ENCODE measurements at regions of chr6 and their contacts with region 1.

Region 1: DNA sequence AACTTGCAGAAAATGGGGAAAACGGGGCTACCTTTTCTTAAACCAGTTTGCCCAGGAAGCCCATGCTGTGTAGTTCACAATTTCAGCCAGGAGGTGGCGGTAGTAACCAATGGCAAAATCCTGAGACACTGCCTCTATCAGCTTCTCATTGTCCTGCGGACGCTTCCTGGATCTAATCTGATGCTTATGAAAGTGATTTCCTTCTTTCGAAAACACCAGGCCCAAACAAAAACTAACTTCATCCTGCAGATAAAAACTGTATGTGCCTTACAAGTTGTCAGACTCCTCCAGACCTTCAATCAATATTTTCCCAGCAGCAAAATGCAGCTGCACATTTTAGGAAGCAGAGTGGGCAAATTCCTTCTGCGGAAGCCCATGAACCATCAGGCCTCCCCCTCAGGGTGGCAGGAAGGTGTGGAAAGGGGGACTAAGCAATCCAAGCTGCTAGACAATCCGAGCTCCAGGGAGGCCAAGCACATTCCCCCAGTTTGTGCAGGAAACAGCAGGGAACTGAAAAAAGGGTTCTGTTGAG is 88.5 kb downstream of the LY86 start:
- DNase-seq: peak; percentile 63
- H3K4me3 ChIP-seq: no peak overlapping the region
- H3K27ac ChIP-seq: no peak overlapping the region
- H3K4me1 ChIP-seq: peaks cover under 1% of the 10 kb centered on the region
- H3K27me3 ChIP-seq: no peaks in the 10 kb centered on the region
- CTCF ChIP-seq: peak; percentile 96 to 98

Region 2: GRCh38 chr6:6724539-6725467 is 47.8 kb after region 1 on chr6:
- CTCF ChIA-PET with region 1: no interaction called
- dilution Hi-C with region 1: no loop called
- in situ Hi-C with region 1: no loop called
- intact Hi-C with region 1: loop called (anchors 1 kb)
- DNase-seq: peak; percentile 55
- H3K4me3 ChIP-seq: peak overlapping the region; percentile 26 to 47 (median 34)
- H3K27ac ChIP-seq: no peak overlapping the region
- H3K4me1 ChIP-seq: peaks cover 13% of the 10 kb centered on the region
- H3K27me3 ChIP-seq: no peaks in the 10 kb centered on the region
- CTCF ChIP-seq: peak; percentile 49 to 78

Region 3: GRCh38 chr6:6736791-6737654 is 60.0 kb after region 1 on chr6:
- CTCF ChIA-PET with region 1: no interaction called
- dilution Hi-C with region 1: no loop called
- in situ Hi-C with region 1: no loop called
- intact Hi-C with region 1: no loop called
- DNase-seq: no peak
- H3K4me3 ChIP-seq: peak overlapping the region in 2 of 3 experiments; percentile 37 to 39
- H3K27ac ChIP-seq: no peak overlapping the region
- H3K4me1 ChIP-seq: peaks cover 5% of the 10 kb centered on the region
- H3K27me3 ChIP-seq: no peaks in the 10 kb centered on the region
- CTCF ChIP-seq: no peak

Region 4: GRCh38 chr6:6803572-6803971 is 126.6 kb after region 1 on chr6:
- CTCF ChIA-PET with region 1: no interaction called
- dilution Hi-C with region 1: no loop called
- in situ Hi-C with region 1: no loop called
- intact Hi-C with region 1: loop called (anchors 5 kb)
- DNase-seq: peak; percentile 100
- H3K4me3 ChIP-seq: peak overlapping the region in 1 of 3 experiments; percentile 6
- H3K27ac ChIP-seq: peak overlapping the region; percentile 98
- H3K4me1 ChIP-seq: peaks cover 25% of the 10 kb centered on the region
- H3K27me3 ChIP-seq: no peaks in the 10 kb centered on the region
- CTCF ChIP-seq: peak in 1 of 2 donors; percentile 17

Region 5: DNA sequence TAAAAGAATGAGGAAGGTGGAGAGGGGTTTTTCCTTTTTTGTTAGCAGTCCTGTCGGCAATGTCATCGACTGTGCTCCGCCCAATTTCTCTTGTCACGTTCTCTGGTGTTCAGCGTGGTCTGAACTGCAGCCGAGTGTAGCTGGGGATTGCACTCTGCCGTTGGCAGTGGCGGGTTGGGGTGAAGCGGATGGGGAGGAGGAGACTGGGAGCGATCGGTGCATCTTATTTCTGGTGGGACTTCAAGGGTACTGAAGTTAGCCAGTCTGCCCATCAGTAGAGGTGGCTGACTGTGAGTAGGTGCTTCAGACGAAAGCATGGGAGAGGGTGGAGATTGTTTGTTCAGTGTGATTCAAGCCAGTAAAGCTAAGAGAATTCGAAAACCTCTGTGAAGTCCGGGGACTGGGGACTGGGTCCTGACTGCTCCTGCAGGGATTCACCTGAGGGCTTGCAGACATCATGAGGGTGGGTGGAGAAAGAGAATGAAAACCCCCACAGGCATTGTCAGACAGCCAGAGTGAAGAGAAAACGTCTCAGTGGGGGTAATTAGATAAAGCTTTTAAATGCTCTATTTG is 435.9 kb after region 1 on chr6:
- CTCF ChIA-PET with region 1: no interaction called
- dilution Hi-C with region 1: no loop called
- in situ Hi-C with region 1: no loop called
- intact Hi-C with region 1: loop called (anchors 10 kb)
- DNase-seq: peak; percentile 61
- H3K4me3 ChIP-seq: peak overlapping the region; percentile 8 to 33 (median 13)
- H3K27ac ChIP-seq: peak overlapping the region; percentile 20
- H3K4me1 ChIP-seq: peaks cover 31% of the 10 kb centered on the region
- H3K27me3 ChIP-seq: no peaks in the 10 kb centered on the region
- CTCF ChIP-seq: no peak

Region 6: DNA sequence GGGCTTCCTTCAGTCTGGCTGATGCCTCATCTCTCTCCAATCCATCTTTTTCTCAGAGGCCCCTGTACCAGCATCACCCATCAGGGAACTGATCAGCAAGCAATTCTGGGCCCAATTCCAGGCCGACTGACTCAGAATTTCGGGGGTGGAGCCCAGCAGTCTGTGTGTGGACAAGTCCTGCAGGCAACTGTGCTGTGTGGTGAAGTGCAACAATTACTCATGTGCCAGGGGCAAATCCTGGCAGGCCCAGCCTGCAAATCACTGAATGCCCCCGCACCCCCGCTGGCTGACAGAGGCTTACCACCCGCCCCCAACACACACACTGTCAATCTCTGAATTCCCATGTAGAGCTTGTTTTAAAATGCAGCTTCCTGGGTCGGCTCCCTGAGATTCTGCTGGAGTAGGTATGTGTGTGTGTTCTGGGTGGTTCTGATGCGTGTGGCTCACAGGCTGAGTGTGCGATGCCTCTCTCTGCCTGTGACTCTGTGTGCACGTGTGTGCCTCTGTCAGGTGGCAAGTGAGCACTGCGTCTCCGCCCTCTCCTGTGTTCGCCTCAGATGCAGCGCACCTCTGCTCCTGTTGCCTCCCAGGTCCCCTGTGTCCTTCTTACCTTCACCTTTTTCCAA is 590.6 kb after region 1 on chr6:
- CTCF ChIA-PET with region 1: no interaction called
- dilution Hi-C with region 1: no loop called
- in situ Hi-C with region 1: no loop called
- intact Hi-C with region 1: loop called (anchors 5 kb)
- DNase-seq: peak; percentile 99
- H3K4me3 ChIP-seq: peak overlapping the region in 2 of 3 experiments; percentile 28 to 40
- H3K27ac ChIP-seq: peak overlapping the region; percentile 67
- H3K4me1 ChIP-seq: peaks cover 22% of the 10 kb centered on the region
- H3K27me3 ChIP-seq: no peaks in the 10 kb centered on the region
- CTCF ChIP-seq: no peak

Region 7: DNA sequence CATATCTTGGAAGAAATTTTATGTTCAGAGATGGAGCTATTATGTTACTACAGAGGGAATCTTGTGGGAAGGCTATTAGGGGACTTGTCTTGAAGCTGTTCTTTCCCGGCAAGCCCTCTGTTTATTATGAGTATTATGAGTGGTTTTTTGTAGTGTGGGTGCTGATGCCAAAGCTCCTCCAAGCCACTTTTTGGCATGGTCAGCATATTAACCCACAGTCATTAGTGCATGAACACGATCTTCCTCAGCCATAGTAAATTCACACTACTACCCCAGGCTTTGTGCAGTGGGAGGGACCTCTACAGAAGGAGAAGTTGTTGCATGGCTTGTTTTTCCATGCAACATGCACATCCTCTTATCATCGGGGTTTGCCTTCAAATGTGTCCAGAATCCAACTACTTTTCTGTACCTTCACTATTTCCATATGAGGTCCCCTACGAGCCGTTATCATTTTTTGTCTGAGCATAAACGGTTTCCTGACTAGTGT is 1042.4 kb after region 1 on chr6:
- CTCF ChIA-PET with region 1: no interaction called
- dilution Hi-C with region 1: no loop called
- in situ Hi-C with region 1: no loop called
- intact Hi-C with region 1: no loop called
- DNase-seq: no peak
- H3K4me3 ChIP-seq: no peak overlapping the region
- H3K27ac ChIP-seq: no peak overlapping the region
- H3K4me1 ChIP-seq: no peaks in the 10 kb centered on the region
- H3K27me3 ChIP-seq: no peaks in the 10 kb centered on the region
- CTCF ChIP-seq: no peak

Measured in mammary epithelial cell (primary cell).